Activated naive CD4-positive, alpha-beta T cell treated with anti-CD3 and anti-CD28 coated beads for 36 hours (primary cell): ENCODE measurements at regions of chr17 and their contacts with region 1.

Region 1: GRCh38 chr17:56009795-56010651 is 143.3 kb upstream of the ANKFN1 start:
- DNase-seq: peak; percentile 48
- H3K4me3 Mint-ChIP-seq: no peak overlapping the region
- H3K27ac Mint-ChIP-seq: peak overlapping the region; percentile 68
- H3K4me1 Mint-ChIP-seq: peaks cover 19% of the 10 kb centered on the region
- H3K27me3 Mint-ChIP-seq: no peaks in the 10 kb centered on the region

Region 2: DNA sequence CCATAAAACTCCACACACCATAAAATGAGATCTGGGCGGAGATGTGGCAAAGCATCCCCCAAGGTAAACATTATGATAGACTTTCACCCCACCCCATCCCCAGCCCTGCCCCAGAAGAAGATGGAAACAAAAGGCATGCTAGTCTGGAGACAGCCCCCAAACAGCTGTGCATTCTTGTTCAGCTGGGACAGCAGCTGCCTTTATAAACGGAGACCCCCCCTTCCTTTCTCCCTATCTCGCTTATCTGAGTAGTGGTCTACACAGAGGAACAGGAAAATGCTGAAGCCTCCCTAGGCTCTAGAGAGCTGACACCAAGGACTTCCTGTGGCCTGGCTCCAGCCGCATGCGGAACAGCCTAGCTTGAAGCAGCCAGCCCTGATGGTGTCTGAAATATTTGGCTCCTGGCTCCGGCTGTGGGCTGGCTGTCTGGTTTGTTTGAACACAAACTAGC is 47.0 kb before region 1 on chr17:
- CTCF ChIA-PET with region 1: no interaction called
- intact Hi-C with region 1: no loop called
- DNase-seq: no peak
- H3K4me3 Mint-ChIP-seq: no peak overlapping the region
- H3K27ac Mint-ChIP-seq: no peak overlapping the region
- H3K4me1 Mint-ChIP-seq: no peaks in the 10 kb centered on the region
- H3K27me3 Mint-ChIP-seq: peaks cover 21% of the 10 kb centered on the region

Region 3: DNA sequence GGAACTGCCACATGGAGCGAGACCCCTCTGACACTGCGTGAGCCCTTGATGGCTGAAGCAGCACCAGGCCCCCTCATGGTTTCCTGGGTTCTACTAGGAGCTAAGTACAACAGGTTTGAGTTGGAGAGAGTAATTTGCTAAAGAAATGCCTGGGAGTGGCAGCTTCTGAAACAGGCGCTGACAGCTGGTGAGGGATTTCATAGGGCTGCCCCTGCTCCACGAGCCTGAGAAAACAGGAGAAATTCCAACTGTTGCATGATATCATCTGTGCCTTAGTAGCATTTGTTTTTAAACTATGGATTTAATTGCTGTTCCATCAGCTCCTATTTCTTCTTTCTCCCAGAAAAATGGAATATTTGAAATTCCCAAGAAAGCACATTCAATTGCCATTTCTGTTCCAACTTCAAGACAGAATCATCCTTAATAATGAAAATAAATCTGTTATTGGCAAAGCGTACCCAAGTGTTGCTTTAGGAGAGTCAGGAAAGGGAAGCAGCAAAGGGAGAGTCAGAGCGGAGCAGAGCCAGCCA is 64.4 kb after region 1 on chr17:
- CTCF ChIA-PET with region 1: no interaction called
- intact Hi-C with region 1: loop called (anchors 10 kb)
- DNase-seq: no peak
- H3K4me3 Mint-ChIP-seq: no peak overlapping the region
- H3K27ac Mint-ChIP-seq: no peak overlapping the region
- H3K4me1 Mint-ChIP-seq: no peaks in the 10 kb centered on the region
- H3K27me3 Mint-ChIP-seq: peaks cover 2% of the 10 kb centered on the region

Region 4: GRCh38 chr17:56099649-56100048 is 89.6 kb after region 1 on chr17:
- CTCF ChIA-PET with region 1: no interaction called
- intact Hi-C with region 1: no loop called
- DNase-seq: no peak
- H3K4me3 Mint-ChIP-seq: no peak overlapping the region
- H3K27ac Mint-ChIP-seq: no peak overlapping the region
- H3K4me1 Mint-ChIP-seq: no peaks in the 10 kb centered on the region
- H3K27me3 Mint-ChIP-seq: peaks cover 16% of the 10 kb centered on the region